ENCODE measurements at regions of chr3 and their contacts with region 1.

Region 1: DNA sequence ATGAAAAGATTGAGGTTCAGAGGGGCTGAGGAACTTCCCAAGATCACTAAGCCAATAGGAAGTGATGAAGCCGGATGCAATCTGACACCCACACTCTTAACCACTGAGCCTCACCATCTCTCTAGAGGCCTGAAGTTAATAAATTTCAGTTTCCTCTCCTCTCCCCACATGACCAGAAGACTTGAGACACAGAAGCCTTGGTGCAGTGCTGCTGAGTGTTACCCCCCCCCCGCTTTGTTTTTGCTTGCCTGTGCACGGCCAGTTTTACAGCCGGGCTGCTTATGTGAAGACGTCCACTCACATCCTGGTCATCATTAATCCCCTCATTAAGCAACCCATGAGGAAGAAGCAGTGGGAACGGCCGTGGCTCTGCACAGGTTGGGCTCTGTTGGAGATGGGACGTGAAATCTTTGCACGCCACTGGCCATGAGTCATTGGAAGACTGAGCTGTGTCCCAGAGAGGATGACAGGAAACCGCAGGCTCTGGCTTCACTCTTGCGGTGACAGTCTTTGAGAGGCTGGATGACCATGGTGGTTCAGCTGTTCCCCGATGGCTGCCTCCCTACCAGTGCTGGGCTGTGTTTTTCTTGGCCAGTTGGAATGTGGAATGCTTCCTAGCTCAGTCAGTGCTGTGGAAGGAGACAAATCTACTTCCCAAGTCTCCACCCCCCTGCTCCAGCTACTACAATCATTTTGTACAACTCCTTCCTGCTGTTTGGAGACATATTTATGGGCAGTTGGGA is 232.6 kb upstream of the LRTM1 start:
- DNase-seq: no peak
- H3K4me3 ChIP-seq: no peak overlapping the region
- H3K27ac ChIP-seq: no peak overlapping the region
- H3K27me3 ChIP-seq: peaks cover 0 to 16% (median 0%) of the 10 kb centered on the region in 45 donors
- CTCF ChIP-seq: no peak

Region 2: DNA sequence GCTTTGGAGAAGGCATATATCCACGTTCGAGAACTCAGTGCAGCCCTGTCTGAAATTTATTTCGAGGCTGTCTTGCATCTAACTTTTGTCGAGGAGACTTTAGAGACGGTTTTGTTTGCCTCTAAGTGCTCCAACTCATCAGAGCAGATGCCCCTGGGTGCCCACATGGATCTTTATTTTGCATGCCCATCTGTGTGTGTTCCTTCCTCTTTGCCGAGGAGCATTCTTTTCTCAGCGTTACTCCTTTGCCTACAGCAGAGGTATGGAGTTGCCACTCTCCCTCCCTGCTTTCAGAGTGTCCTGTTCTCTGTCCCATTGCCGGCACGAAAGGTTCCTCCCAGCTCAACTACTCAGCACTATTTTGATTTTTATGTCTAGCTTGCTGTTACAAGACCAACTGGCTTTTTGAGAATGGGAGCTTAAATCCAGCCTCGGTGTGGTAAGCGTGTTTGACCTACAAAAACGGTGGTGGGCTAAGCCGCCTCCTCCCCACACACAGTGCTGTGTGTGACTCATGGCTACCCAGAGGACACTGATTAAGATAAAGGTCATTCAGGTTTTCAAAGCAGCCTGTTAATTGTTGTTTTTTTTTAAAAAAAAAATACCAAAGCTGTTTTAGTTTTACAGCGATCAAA is 297.2 kb before region 1 on chr3:
- intact Hi-C with region 1: loop called in 1 of 2 experiments (anchors 10 kb)
- DNase-seq: peak in 1 of 10 donors; percentile 13
- H3K4me3 ChIP-seq: no peak overlapping the region
- H3K27ac ChIP-seq: no peak overlapping the region
- H3K27me3 ChIP-seq: no peaks in the 10 kb centered on the region
- CTCF ChIP-seq: no peak

Measured in dorsolateral prefrontal cortex (tissue), 120 donors.